ENCODE measurements at regions of chr5 and their contacts with region 1.

Region 1: DNA sequence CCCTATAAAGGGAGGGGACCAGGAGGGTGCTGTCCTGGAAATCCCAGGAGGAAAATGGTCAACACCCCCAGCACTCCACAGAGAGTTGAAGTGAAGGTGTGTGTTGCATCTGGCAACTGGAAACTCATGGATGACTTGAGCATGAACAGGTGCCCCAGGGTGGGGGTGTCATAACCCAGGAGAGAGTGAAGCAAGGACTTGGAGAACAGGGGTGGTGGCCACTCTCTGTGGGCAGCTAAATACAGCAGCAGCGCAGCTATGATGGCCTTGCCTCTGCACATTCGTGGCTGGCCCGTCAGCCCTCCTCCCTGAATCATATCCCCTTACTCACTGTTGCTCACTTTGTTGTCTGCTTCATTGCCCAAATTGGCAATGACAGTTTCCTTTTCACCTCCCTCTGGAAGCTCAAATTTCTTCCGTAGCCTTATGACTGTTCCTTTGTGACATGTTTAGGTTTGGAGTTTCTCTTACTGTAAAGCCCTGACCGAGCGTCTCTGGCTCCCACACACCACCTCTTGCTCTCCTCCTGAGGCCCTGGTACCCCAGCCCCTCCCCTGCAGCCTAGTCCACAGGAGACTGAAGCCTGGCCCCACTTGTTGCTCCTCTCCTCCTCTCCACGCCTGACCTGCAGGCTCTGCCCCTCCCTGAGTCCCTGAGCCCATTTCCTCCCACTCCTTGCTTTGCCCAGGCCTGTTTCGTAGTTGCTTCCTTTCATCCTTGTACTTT is 185.8 kb downstream of the CD180 start:
- DNase-seq: peak; percentile 90
- H3K4me3 Mint-ChIP-seq: peak overlapping the region; percentile 65
- H3K27ac Mint-ChIP-seq: peak overlapping the region; percentile 92
- H3K4me1 Mint-ChIP-seq: peaks cover 80% of the 10 kb centered on the region
- H3K27me3 Mint-ChIP-seq: no peaks in the 10 kb centered on the region
- CTCF ChIP-seq: no peak

Region 2: GRCh38 chr5:66891183-66891925 is 119.5 kb before region 1 on chr5:
- CTCF ChIA-PET with region 1: no interaction called
- POLR2A ChIA-PET with region 1: interaction called, 32 read pairs
- intact Hi-C with region 1: no loop called
- DNase-seq: peak; percentile 95
- H3K4me3 Mint-ChIP-seq: peak overlapping the region; percentile 32
- H3K27ac Mint-ChIP-seq: peak overlapping the region; percentile 100
- H3K4me1 Mint-ChIP-seq: peaks cover 42% of the 10 kb centered on the region
- H3K27me3 Mint-ChIP-seq: no peaks in the 10 kb centered on the region
- CTCF ChIP-seq: no peak

Region 3: DNA sequence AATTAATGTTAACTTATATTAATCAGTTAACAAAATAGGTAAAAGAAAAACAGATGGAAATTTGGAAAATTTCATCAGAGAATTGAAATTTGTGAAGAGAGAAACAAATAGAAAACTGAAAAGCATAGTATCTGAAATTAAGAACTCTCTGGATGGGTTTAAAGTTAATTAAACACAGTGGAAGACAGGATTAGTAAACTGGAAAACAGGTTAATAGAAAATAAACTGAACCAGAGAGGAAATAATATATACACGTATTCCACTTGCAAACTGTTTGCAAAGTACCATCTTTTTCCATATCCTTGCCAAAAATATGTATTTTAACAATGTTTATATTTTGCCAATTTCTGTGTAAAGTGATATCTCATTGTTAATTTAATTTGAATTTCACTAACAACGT is 71.8 kb before region 1 on chr5:
- CTCF ChIA-PET with region 1: no interaction called
- POLR2A ChIA-PET with region 1: no interaction called
- intact Hi-C with region 1: no loop called
- DNase-seq: no peak
- H3K4me3 Mint-ChIP-seq: no peak overlapping the region
- H3K27ac Mint-ChIP-seq: no peak overlapping the region
- H3K4me1 Mint-ChIP-seq: no peaks in the 10 kb centered on the region
- H3K27me3 Mint-ChIP-seq: no peaks in the 10 kb centered on the region
- CTCF ChIP-seq: no peak

Region 4: DNA sequence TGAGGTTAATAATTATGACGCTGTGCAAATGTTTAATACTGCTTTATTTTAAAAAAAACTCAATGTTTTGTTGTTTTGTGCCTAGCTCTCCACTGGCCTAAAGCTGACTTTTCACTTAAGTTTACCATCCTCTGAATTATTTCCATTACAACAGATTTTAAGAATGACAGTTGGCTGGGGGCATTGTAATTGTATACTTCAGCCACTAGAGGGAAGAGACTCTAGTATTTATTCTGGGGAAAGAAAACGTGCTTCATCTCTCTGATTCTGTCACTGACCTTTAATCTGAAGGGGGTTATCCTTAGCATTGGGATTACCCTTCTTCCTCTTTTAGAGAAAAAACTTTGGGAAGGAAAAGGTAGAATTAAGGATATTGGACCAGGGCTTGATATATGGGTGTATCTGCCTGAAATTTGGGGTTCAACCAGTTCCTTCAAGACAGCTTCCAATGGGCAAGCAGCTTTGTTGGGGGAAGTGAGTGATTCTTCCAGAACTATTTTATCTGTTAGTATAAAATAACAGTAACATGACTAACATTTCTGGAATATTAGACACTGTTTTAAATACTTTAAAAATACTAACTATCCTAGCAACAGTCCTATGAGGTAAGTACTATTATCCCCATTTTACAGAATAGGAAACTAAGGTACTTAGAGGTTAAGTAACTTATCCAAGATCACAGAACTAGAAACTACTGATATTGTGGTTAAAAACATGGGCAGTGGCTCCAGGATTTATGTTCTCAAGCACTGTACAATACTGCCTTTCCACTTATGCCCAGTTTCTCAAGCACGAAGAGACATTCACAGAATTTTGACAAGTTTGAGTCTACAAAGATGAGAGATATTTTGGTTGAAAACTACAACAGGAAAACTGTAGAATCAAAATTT is 22.7 kb before region 1 on chr5:
- CTCF ChIA-PET with region 1: interaction called, 3 read pairs
- POLR2A ChIA-PET with region 1: interaction called, 117 read pairs
- intact Hi-C with region 1: no loop called
- DNase-seq: peak; percentile 48
- H3K4me3 Mint-ChIP-seq: no peak overlapping the region
- H3K27ac Mint-ChIP-seq: no peak overlapping the region
- H3K4me1 Mint-ChIP-seq: peaks cover 5% of the 10 kb centered on the region
- H3K27me3 Mint-ChIP-seq: no peaks in the 10 kb centered on the region
- CTCF ChIP-seq: peak; percentile 54

Region 5: DNA sequence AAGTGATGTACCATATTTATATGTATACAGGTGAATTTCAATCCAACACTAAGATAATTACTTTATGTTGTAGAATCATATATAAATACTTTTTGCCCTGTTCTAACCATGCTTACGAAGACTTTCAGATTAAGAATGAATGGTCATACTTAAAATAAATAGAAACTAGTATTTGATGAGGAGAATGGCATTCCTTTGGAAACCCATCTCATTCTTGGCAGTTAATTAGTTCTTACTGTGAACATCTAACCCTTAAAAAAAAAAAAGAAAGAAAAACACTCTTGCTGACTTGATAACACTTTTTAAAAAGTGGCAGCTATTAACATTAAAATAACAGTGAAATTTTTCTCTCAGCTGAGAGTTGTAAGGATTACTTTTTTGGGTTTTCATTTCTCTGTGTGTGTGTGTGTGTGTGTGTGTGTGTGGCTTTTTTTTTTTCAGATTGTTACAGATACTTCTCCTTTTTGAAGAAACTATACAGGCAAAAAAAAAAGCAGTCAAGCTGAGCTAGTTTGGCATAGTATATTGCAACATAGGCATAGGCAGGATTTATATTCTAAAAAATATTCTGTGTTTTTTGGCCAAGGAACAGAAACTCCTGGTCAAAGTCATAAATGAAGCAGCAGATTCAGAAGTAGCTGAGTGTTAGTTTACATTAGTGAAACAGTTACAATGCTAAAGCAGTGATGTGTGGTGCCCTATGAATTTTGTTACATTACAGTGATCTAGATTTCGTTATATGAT is 22.2 kb after region 1 on chr5:
- CTCF ChIA-PET with region 1: no interaction called
- POLR2A ChIA-PET with region 1: interaction called, 15 read pairs
- intact Hi-C with region 1: no loop called
- DNase-seq: no peak
- H3K4me3 Mint-ChIP-seq: no peak overlapping the region
- H3K27ac Mint-ChIP-seq: no peak overlapping the region
- H3K4me1 Mint-ChIP-seq: peaks cover 48% of the 10 kb centered on the region
- H3K27me3 Mint-ChIP-seq: no peaks in the 10 kb centered on the region
- CTCF ChIP-seq: no peak

Region 6: DNA sequence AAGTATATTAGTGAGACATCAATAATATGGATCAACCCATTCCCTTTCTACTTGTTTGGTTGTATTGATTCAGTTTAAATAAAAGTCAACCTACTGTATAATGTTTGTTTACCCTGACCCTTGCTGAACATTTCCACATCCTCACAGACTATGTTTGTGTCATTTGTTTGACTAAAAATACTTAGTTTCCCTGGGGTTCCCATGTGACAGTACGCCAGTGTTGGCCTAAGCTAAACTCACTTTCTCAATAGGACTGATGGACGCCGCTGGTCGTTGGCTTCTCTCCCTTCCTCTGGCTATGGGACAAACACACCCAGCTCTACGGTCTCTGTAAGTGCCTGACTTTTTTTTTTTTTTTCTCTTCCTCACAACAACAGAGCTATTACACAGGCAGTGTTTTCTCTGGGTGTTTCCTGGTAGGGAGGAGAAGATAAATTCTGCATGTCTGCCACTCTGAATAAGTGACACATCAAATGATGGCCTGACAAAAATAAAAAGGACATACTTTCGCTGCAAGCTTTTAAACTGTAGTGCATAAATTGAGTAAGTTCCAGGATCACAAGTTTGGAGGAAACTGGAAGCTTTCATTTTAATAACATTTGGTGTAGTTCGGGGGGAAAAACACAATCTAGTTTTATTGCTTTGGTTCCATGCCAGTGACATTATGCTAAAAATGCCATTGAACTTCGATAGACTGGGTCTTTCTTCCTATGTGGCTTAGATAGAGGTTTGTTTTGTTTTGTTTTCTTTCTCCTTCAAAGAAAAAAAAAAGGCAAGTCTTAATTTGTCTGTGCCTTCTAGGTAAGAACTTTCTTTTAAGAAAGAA is 84.7 kb after region 1 on chr5:
- CTCF ChIA-PET with region 1: no interaction called
- POLR2A ChIA-PET with region 1: interaction called, 12 read pairs
- intact Hi-C with region 1: loop called (anchors 5 kb)
- DNase-seq: no peak
- H3K4me3 Mint-ChIP-seq: peak overlapping the region; percentile 24
- H3K27ac Mint-ChIP-seq: peak overlapping the region; percentile 94
- H3K4me1 Mint-ChIP-seq: peaks cover 27% of the 10 kb centered on the region
- H3K27me3 Mint-ChIP-seq: no peaks in the 10 kb centered on the region
- CTCF ChIP-seq: no peak

Measured in MCF 10A (cell line).